ENCODE measurements at regions of chr5 and their contacts with region 1.

Region 1: GRCh38 chr5:81838307-81838906 is 87.5 kb upstream of the SSBP2 start:
- DNase-seq: peak; percentile 44 to 47
- H3K4me3 ChIP-seq: no peak overlapping the region
- H3K4me3 Mint-ChIP-seq: no peak overlapping the region
- H3K27ac Mint-ChIP-seq: no peak overlapping the region
- H3K4me1 ChIP-seq: 0 out of 2 replicates have a peak, but pooled peaks cover 3% of the 10 kb centered on the region
- H3K4me1 Mint-ChIP-seq: peaks cover 6% of the 10 kb centered on the region
- H3K27me3 ChIP-seq: no peaks in the 10 kb centered on the region
- H3K27me3 Mint-ChIP-seq: no peaks in the 10 kb centered on the region
- CTCF ChIP-seq: peak; percentile 64 to 76

Region 2: DNA sequence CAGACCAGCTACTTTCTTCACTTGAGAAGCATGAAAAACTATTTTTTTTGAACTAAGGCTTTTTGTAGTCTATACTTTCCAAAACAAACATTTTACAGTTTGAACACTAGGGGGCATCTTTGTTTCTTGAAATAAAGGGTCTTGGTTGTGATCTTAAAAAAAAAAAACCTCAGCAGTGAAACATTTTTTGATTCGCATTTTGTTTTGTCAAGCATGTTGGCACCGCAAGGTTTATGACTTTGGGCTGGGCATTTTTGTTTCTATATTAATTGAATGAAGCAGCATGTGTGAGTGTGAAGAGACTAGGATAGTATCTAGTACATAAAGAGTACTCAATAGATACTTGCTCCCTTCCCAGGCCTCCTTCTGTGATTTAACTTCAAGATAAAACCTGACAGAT is 412.8 kb before region 1 on chr5:
- CTCF ChIA-PET with region 1: interaction called, 3 read pairs
- POLR2A ChIA-PET with region 1: no interaction called
- intact Hi-C with region 1: loop called (anchors 5 kb)
- DNase-seq: peak in 1 of 2 experiments; percentile 25
- H3K4me3 ChIP-seq: no peak overlapping the region
- H3K4me3 Mint-ChIP-seq: no peak overlapping the region
- H3K27ac Mint-ChIP-seq: no peak overlapping the region
- H3K4me1 ChIP-seq: peaks cover 19% of the 10 kb centered on the region
- H3K4me1 Mint-ChIP-seq: peaks cover 19% of the 10 kb centered on the region
- H3K27me3 ChIP-seq: no peaks in the 10 kb centered on the region
- H3K27me3 Mint-ChIP-seq: no peaks in the 10 kb centered on the region
- CTCF ChIP-seq: peak; percentile 45 to 57

Region 3: DNA sequence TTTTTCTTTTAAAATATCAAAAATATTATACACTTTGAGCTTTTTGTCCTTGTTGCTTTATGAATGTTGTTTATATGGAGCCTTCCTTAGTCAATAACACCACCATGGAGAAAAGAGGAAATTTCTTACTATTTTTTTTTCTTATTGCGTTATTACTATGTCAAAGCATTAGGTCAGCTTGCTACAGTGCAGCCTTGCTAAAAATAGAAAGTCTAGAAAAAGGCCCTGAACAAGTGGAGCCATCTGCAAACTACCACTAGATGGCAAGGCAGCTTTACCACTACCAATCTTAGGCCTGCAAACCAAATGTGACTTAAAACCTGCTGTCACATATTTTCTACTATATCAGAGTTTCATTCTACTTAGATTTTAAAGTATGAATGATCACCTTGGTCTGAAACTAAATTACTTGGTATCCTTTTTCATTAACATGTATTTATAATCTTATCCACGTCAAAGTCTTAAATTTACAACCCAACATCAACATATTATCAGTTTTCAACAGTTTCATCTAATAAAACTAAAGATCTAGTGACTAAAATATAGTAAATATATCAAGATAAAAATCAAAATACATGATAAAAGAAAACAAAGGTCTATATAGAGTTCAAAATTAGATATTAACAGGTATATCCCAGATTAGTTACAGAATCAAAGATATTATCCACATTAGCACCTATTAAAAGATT is 331.4 kb before region 1 on chr5:
- CTCF ChIA-PET with region 1: no interaction called
- POLR2A ChIA-PET with region 1: no interaction called
- intact Hi-C with region 1: loop called (anchors 1 kb)
- DNase-seq: peak; percentile 47 to 63
- H3K4me3 ChIP-seq: no peak overlapping the region
- H3K4me3 Mint-ChIP-seq: no peak overlapping the region
- H3K27ac Mint-ChIP-seq: no peak overlapping the region
- H3K4me1 ChIP-seq: no peaks in the 10 kb centered on the region; the same call in 1 of the 2 replicates
- H3K4me1 Mint-ChIP-seq: peaks cover 7% of the 10 kb centered on the region
- H3K27me3 ChIP-seq: no peaks in the 10 kb centered on the region
- H3K27me3 Mint-ChIP-seq: peaks cover 2% of the 10 kb centered on the region
- CTCF ChIP-seq: peak; percentile 65 to 96